ENCODE measurements at regions of chr16 and their contacts with region 1.

Region 1: DNA sequence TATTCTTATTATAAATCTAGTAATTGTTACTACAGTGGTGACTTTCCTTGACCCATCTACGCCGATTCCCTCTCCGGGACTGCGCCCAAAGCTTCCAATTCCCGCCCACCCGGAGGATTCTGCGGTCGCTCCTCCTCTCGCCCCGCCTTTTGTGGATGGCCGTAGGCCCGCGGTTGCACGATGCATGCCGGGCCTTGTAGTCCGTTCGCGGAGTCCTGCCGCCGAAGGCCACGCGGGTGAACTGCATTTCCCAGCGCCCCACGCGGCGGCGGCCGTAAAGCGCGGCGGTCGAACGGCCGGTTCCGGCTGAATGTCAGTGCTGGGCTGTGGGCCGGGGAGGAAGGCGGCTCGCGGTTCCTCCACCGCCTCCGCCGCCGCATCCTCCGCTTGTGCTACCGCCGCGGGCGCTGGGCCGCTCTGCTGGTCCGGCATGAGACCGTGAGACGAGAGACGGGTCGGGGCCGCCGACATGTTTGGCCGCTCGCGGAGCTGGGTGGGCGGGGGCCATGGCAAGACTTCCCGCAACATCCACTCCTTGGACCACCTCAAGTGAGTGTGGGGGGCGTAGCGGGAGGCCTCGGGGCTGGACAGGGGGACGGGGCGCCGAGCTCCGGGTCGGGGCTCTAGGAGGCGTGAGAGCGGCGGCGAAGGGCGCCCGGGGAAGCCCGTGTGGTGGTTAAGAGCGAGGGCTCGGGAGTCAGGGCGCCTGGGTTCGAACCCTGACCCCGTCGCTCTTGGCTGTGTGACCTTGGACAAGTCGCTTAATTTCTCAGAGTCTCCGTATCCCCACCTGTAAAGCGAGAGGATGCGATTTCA is at the start of gene CLEC16A:
- DNase-seq: peak; percentile 97
- H3K4me3 Mint-ChIP-seq: peak within 1 kb of the TSS; percentile 91
- H3K27ac Mint-ChIP-seq: peak within 1 kb of the TSS; percentile 80
- H3K4me1 Mint-ChIP-seq: peaks cover 56% of the 10 kb centered on the region
- H3K27me3 Mint-ChIP-seq: no peaks in the 10 kb centered on the region
- total RNA-seq, gene CLEC16A: 36.3 and 37.4 TPM in 2 replicates

Region 2: GRCh38 chr16:10385725-10386516 is 558.5 kb before region 1 on chr16 and contains the start of gene ATF7IP2:
- intact Hi-C with region 1: loop called (anchors 5 kb)
- DNase-seq: peak; percentile 87
- H3K4me3 Mint-ChIP-seq: peak within 1 kb of the TSS; percentile 97
- H3K27ac Mint-ChIP-seq: peak within 1 kb of the TSS; percentile 97
- H3K4me1 Mint-ChIP-seq: peaks cover 58% of the 10 kb centered on the region
- H3K27me3 Mint-ChIP-seq: no peaks in the 10 kb centered on the region
- total RNA-seq, gene ATF7IP2: 25.9 and 28.7 TPM in 2 replicates

Region 3: DNA sequence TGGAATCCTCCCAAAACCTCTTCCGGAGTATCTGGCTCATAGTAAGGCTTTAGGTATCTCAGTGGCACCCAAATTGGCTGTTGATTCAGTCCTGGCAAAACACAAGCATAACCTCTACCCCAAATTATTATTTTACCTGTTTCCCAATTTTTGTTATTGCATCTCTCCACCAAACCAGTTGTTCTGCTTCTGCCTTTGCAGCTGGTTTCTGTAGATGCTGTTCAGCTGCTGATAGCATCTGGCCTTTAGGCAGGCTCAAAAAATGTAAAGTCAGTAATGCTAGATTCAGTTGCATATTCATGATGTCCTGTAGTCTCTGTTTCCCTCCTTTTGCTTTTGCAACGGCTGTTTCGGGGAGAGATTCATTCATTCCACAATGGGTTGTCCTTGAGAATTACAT is 524.7 kb before region 1 on chr16:
- intact Hi-C with region 1: no loop called
- DNase-seq: no peak
- H3K4me3 Mint-ChIP-seq: no peak overlapping the region
- H3K27ac Mint-ChIP-seq: no peak overlapping the region
- H3K4me1 Mint-ChIP-seq: no peaks in the 10 kb centered on the region
- H3K27me3 Mint-ChIP-seq: no peaks in the 10 kb centered on the region

Region 4: DNA sequence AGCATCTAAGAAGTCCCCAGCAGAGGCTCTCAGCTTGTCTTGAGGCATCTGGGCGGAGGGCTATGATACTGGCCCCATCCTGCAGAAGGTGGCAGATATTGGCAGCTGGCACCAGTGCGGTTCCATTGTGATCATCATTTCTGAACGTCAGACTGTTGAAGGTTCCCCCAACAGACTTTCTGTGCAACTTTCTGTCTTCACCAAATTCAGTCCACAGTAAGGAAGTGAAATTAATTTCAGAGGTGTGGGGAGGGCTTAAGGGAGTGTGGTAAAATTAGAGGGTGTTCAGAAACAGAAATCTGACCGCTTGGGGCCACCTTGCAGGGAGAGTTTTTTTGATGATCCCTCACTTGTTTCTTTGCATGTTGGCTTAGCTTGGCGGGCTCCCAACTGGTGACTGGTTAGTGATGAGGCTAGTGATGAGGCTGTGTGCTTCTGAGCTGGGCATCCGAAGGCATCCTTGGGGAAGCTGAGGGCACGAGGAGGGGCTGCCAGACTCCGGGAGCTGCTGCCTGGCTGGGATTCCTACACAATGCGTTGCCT is 67.6 kb before region 1 on chr16 and contains the start of gene CIITA:
- intact Hi-C with region 1: loop called (anchors 2 kb)
- DNase-seq: peak; percentile 53
- H3K4me3 Mint-ChIP-seq: peak within 1 kb of the TSS; percentile 86
- H3K27ac Mint-ChIP-seq: peak within 1 kb of the TSS; percentile 59
- H3K4me1 Mint-ChIP-seq: peaks cover 88% of the 10 kb centered on the region
- H3K27me3 Mint-ChIP-seq: peaks cover 14% of the 10 kb centered on the region
- total RNA-seq, gene CIITA: 12.0 and 13.0 TPM in 2 replicates

Region 5: GRCh38 chr16:11066231-11066870 is 121.9 kb after region 1 on chr16:
- intact Hi-C with region 1: no loop called
- DNase-seq: no peak
- H3K4me3 Mint-ChIP-seq: no peak overlapping the region
- H3K27ac Mint-ChIP-seq: no peak overlapping the region
- H3K4me1 Mint-ChIP-seq: peaks cover 37% of the 10 kb centered on the region
- H3K27me3 Mint-ChIP-seq: no peaks in the 10 kb centered on the region

Region 6: DNA sequence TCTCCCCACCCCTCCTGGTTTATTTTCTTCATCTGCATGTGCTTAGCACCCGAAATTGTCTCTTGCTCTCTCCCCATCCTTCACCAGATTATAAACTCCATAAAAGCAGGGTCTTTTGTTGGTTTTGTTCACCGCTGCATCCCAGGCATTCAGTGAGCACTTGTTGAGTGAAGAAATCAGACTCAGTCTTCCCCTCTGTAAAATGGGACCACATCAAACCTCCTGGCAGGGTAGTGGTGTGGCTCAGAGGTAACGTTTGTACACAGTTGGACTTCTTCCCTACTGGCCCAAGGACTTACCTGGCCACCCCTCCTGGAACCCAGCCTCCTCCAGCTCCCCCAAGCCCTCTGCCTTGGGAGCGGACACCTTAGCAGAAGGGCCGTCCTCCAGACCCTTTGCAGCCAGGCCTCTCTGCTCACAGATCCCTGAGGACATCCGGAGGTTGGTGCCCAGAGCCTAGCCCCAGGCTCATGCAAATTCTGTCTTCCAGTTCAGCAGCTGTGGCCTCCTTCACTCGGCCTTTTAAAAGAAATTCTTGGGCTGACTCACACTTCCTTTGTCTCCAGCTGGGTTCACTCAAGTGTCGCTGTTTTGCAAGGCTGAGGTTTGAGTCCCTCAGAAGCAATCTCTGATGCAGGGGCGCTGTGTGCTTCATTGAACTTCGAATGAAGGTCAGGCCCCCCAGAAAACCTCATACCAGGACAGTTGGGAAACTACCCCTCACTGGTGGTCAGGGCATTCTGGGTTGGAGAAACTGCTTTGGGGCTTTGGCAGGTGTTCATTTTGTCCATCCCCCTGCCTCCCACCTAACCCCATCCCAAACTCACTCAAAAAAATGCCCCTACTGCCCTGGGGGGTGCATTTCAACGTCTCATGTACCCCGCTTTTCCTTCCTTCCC is 384.0 kb after region 1 on chr16:
- intact Hi-C with region 1: no loop called
- DNase-seq: peak; percentile 55
- H3K4me3 Mint-ChIP-seq: peak overlapping the region; percentile 68
- H3K27ac Mint-ChIP-seq: peak overlapping the region; percentile 74
- H3K4me1 Mint-ChIP-seq: peaks cover 69% of the 10 kb centered on the region
- H3K27me3 Mint-ChIP-seq: peaks cover 5% of the 10 kb centered on the region

Region 7: GRCh38 chr16:11667824-11668622 is 723.6 kb after region 1 on chr16 and contains the start of gene SNN:
- intact Hi-C with region 1: loop called (anchors 1 kb)
- DNase-seq: peak; percentile 85
- H3K4me3 Mint-ChIP-seq: peak within 1 kb of the TSS; percentile 80
- H3K27ac Mint-ChIP-seq: no peak within 1 kb of the TSS
- H3K4me1 Mint-ChIP-seq: peaks cover 66% of the 10 kb centered on the region
- H3K27me3 Mint-ChIP-seq: no peaks in the 10 kb centered on the region
- total RNA-seq, gene SNN: 7.3 and 7.9 TPM in 2 replicates

Region 8: GRCh38 chr16:11797166-11797956 is 852.9 kb after region 1 on chr16 and contains the start of gene ZC3H7A:
- intact Hi-C with region 1: loop called (anchors 5 kb)
- DNase-seq: peak; percentile 95
- H3K4me3 Mint-ChIP-seq: peak within 1 kb of the TSS; percentile 92
- H3K27ac Mint-ChIP-seq: peak within 1 kb of the TSS; percentile 94
- H3K4me1 Mint-ChIP-seq: peaks cover 75% of the 10 kb centered on the region
- H3K27me3 Mint-ChIP-seq: no peaks in the 10 kb centered on the region
- total RNA-seq, gene ZC3H7A: 71.0 and 78.9 TPM in 2 replicates

Region 9: GRCh38 chr16:11915644-11916523 is 971.4 kb after region 1 on chr16 and contains the start of gene GSPT1:
- intact Hi-C with region 1: loop called (anchors 1 kb)
- DNase-seq: peak; percentile 99
- H3K4me3 Mint-ChIP-seq: peak within 1 kb of the TSS; percentile 91
- H3K27ac Mint-ChIP-seq: peak within 1 kb of the TSS; percentile 94
- H3K4me1 Mint-ChIP-seq: peaks cover 32% of the 10 kb centered on the region
- H3K27me3 Mint-ChIP-seq: peaks cover 8% of the 10 kb centered on the region
- total RNA-seq, gene GSPT1: 207 and 214 TPM in 2 replicates